ENCODE measurements at regions of chr17 and their contacts with region 1.

Region 1: GRCh38 chr17:2392252-2393173 is 8.3 kb downstream of the MNT start:
- DNase-seq: peak; percentile 96
- H3K4me3 Mint-ChIP-seq: peak overlapping the region; percentile 90
- H3K27ac Mint-ChIP-seq: peak overlapping the region; percentile 94
- H3K4me1 Mint-ChIP-seq: peaks cover 42% of the 10 kb centered on the region
- H3K27me3 Mint-ChIP-seq: no peaks in the 10 kb centered on the region

Region 2: GRCh38 chr17:2511462-2512369 is 119.2 kb after region 1 on chr17 and contains the start of gene METTL16:
- intact Hi-C with region 1: loop called (anchors 2 kb)
- DNase-seq: peak; percentile 96
- H3K4me3 Mint-ChIP-seq: no peak within 1 kb of the TSS
- H3K27ac Mint-ChIP-seq: no peak within 1 kb of the TSS
- H3K4me1 Mint-ChIP-seq: peaks cover 17% of the 10 kb centered on the region
- H3K27me3 Mint-ChIP-seq: peaks cover 2% of the 10 kb centered on the region
- total RNA-seq, gene METTL16: 49.1 and 49.2 TPM in 2 replicates

Measured in activated T-helper 2 cell treated with anti-CD3 and anti-CD28 coated beads, Interferon-gamma antibody, Interleukin-2, Interleukin-4, amounts not matched to agents 10 μg/mL and 5 μg/mL and 100 μg/mL, durations not matched to agents 14 hours and 24 hours and 36 hours (primary cell).